Activated CD4-positive, alpha-beta T cell treated with anti-CD3 and anti-CD28 coated beads for 36 hours (primary cell): ENCODE measurements at regions of chr4 and their contacts with region 1.

Region 1: DNA sequence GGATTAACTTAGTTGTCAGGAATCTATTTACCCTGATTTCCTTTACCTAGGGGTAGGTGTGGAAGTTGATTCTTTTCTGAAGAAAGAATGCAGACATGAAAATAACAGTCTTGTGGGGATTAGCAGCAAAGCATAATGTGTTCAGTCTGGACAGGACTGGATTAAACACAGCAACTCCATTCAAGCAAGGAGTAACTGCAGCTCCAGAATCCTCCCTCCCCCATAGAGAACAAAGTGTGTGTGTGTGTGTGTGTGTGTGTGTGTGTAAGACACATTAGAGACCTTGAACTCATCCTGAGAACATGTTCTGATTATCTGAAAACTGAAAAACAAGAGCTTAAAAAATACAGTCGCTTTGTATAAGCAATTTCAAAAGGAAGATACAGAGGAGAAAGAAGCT is 9.3 kb downstream of the C4orf54 start:
- DNase-seq: no peak
- ATAC-seq: no peak
- H3K4me3 Mint-ChIP-seq: no peak overlapping the region
- H3K27ac Mint-ChIP-seq: no peak overlapping the region
- H3K4me1 Mint-ChIP-seq: no peaks in the 10 kb centered on the region
- H3K27me3 Mint-ChIP-seq: no peaks in the 10 kb centered on the region

Region 2: GRCh38 chr4:99615170-99615820 is 33.0 kb before region 1 on chr4:
- CTCF ChIA-PET with region 1: no interaction called
- POLR2A ChIA-PET with region 1: interaction called, 10 read pairs
- intact Hi-C with region 1: no loop called
- DNase-seq: no peak
- ATAC-seq: no peak
- H3K4me3 Mint-ChIP-seq: no peak overlapping the region
- H3K27ac Mint-ChIP-seq: no peak overlapping the region
- H3K4me1 Mint-ChIP-seq: no peaks in the 10 kb centered on the region
- H3K27me3 Mint-ChIP-seq: peaks cover 7% of the 10 kb centered on the region